ENCODE measurements at regions of chr5 and their contacts with region 1.

Region 1: GRCh38 chr5:67095346-67096171 is 101.0 kb downstream of the CD180 start:
- DNase-seq: peak; percentile 78
- ATAC-seq: peak; percentile 94 to 98

Region 2: DNA sequence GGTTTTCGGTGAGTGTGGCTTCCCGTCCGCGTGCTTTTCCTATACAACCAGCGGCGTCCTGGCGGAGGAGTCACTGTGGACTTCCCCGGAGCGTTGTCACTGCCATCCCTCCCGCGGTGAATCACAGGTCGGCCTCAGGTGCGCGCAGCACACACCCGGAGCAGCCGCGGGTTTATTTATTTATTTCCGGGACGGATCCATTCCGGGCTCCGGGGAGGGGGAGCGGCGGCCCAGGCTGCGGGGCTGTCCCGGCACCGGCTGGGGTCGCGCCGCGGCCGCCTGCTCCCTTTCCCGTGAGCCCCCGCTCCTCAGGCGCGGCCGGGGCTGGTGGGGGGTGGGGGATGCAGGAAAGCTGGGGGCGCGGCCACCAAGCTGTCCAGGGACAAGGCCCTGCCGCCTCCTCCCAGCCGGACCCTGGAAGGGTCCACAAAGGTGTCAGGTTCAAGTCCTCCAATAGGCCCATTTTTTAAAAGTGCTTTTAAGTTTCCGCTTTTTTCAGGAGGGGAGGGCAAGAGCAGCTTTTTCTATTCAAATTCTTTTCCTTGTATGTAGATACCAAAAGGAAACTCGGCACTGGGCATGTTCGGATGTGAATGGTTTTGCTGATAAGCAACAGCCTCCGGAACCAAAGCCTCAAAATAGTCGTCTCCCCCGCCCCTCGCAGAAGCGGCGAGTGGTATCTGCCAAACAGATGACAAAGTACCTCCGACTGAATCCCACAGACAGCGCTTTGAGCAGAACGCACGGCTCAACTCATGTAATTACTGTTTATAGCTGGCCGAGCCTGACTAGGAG is 91.4 kb before region 1 on chr5:
- intact Hi-C with region 1: loop called (anchors 10 kb)
- DNase-seq: peak; percentile 92
- ATAC-seq: peak; percentile 91 to 92

Region 3: GRCh38 chr5:67047160-67047559 is 48.4 kb before region 1 on chr5:
- intact Hi-C with region 1: loop called in 1 of 2 experiments (anchors 10 kb)
- DNase-seq: peak; percentile 42
- ATAC-seq: peak; percentile 72 to 88